Spleen (tissue), 13 donors: ENCODE measurements at regions of chr13 and their contacts with region 1.

Region 1: DNA sequence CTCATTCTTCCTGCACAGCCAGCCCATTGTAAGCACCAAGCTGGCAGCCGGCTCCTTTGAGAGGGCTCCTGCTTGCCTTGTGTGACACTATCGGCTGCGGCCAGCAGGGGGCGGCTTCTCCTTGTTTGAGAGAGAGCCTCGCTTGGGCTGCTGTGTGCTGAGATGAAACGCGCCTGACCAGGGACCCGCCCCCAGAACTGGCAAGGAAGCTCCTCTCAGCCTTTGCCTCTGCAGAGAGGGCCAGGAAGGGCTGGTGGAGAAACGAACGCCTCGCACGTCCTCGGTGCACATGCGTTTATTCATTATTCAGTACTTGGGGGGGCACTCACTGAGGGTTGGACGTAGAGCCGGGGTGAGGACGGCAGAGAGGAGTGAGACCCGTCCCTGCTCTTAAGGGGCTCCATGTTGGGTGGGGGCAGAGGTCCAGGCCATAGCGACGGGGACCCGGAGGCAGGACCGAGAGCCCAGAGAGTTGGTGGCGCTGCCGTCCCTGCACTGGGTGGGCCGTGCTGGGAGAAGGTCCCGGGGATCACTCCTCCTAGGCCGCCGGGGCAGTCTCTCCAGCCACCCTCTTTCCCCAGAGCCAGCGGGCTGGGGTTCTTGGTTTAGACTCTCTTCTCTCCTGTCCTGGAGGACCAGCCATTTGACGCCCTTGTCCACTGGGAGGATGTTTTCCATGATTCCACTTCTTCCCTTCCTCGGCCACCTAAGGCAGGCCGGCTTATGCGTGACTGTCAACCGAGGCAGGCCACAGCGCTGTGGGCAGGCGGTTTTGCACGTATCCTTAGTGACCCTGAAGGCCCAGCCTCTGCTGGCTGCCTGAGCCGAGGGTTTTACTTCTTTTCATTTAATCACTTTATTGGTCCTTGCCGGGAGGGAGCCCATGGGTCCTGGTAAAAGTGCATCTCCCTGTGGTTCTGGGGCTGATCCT is 174.5 kb downstream of the KATNAL1 start:
- DNase-seq: peak; percentile 99
- H3K4me3 ChIP-seq: peak overlapping the region in 1 of 8 donors; percentile 35
- H3K27ac ChIP-seq: no peak overlapping the region
- H3K4me1 ChIP-seq: peaks cover 0 to 11% (median 7%) of the 10 kb centered on the region in 6 donors
- H3K27me3 ChIP-seq: no peaks in the 10 kb centered on the region
- CTCF ChIP-seq: peak; percentile 88 to 98 (median 94)
- POLR2A ChIP-seq: no peak

Region 2: DNA sequence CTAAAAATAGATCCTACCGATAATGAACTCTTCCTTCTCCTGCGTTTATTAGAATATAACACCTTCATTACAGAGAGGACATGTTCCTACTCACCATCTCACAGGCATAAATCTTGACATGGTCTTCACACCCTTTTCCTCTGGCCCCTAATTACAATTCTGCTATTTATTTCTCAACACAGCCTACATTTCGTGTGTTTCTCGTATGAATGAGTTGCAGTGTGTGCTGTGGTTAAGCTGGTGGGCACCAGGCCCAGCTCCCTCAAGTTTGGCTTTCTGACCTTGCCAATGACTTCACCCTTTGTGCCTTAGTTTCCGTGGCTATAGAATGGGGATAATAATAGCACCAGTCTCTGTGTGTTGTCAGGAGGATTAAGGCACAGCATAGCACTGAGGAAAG is 186.8 kb after region 1 on chr13:
- intact Hi-C with region 1: no loop called
- DNase-seq: no peak
- H3K4me3 ChIP-seq: no peak overlapping the region
- H3K27ac ChIP-seq: no peak overlapping the region
- H3K4me1 ChIP-seq: peaks cover 0 to 8% (median 2%) of the 10 kb centered on the region in 6 donors
- H3K27me3 ChIP-seq: no peaks in the 10 kb centered on the region
- CTCF ChIP-seq: no peak
- POLR2A ChIP-seq: no peak

Region 3: GRCh38 chr13:30334663-30335386 is 201.9 kb after region 1 on chr13:
- intact Hi-C with region 1: loop called (anchors 10 kb)
- DNase-seq: no peak
- H3K4me3 ChIP-seq: no peak overlapping the region
- H3K27ac ChIP-seq: no peak overlapping the region
- H3K4me1 ChIP-seq: peaks cover 0 to 32% (median 7%) of the 10 kb centered on the region in 6 donors
- H3K27me3 ChIP-seq: no peaks in the 10 kb centered on the region
- CTCF ChIP-seq: peak in 9 of 11 experiments; percentile 7 to 62 (median 49)
- POLR2A ChIP-seq: no peak

Region 4: GRCh38 chr13:30581582-30581981 is 448.7 kb after region 1 on chr13:
- intact Hi-C with region 1: loop called (anchors 10 kb)
- DNase-seq: no peak
- H3K4me3 ChIP-seq: no peak overlapping the region
- H3K27ac ChIP-seq: no peak overlapping the region
- H3K4me1 ChIP-seq: peaks cover 0 to 22% (median 7%) of the 10 kb centered on the region in 6 donors
- H3K27me3 ChIP-seq: no peaks in the 10 kb centered on the region
- CTCF ChIP-seq: peak in 7 of 11 experiments; percentile 14 to 40 (median 24)
- POLR2A ChIP-seq: no peak

Region 5: GRCh38 chr13:30802953-30803478 is 670.1 kb after region 1 on chr13:
- intact Hi-C with region 1: loop called (anchors 5 kb)
- DNase-seq: peak; percentile 96
- H3K4me3 ChIP-seq: peak overlapping the region in 7 of 8 donors; percentile 8 to 61 (median 29)
- H3K27ac ChIP-seq: peak overlapping the region in 4 of 8 donors; percentile 5 to 62 (median 20)
- H3K4me1 ChIP-seq: peaks cover 12 to 42% (median 28%) of the 10 kb centered on the region in 6 donors
- H3K27me3 ChIP-seq: no peaks in the 10 kb centered on the region
- CTCF ChIP-seq: peak; percentile 81 to 98 (median 95)
- POLR2A ChIP-seq: peak in 1 of 3 donors; percentile 40

Region 6: DNA sequence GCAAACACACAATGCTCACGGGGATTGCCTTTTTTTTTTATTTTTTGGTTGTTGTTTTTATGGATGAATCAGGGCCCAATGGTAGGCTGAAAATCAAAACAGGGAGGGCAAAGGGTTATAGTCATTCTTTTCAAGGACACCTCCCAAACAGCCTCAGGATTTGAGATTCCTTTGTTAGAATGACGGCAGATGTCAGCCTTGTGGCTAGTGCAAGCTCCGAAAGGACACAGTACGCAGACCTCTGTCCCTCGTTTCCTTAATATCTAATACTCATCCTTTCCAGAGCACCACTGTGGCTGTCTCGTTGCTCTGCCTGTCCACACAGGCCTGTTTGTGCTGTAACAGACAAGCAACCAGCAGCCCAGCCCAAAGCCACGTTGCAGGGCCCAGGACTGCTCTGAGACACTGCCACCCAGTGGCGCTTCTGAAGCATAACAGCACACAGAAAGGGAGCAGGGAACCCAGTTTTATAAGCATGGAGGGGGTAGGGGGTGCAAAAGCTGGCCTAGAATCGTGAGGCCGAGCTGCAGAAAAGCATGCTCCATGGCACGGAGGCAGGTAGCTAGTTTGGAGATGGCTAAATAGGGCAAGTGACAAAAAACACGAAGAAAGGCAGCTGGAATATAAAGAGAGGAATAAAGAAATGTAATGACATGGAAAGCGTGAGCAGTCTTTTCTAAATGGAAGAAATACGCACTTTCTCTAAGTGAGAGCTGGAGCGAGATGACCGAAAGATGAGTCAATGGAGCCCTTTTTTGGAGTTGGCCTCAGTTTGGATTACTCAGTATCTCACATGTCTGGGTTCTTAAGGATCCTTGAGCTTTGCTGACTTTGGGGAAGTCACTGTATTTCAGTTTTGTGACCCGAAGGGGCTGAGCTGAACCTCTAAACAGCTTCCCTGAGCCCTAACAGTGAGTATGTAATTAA is 732.5 kb after region 1 on chr13:
- intact Hi-C with region 1: loop called (anchors 10 kb)
- DNase-seq: peak; percentile 90
- H3K4me3 ChIP-seq: no peak overlapping the region
- H3K27ac ChIP-seq: peak overlapping the region in 1 of 8 donors; percentile 42
- H3K4me1 ChIP-seq: peaks cover 5 to 19% (median 10%) of the 10 kb centered on the region in 6 donors
- H3K27me3 ChIP-seq: no peaks in the 10 kb centered on the region
- CTCF ChIP-seq: peak; percentile 71 to 91 (median 88)
- POLR2A ChIP-seq: no peak

Region 7: GRCh38 chr13:31044377-31045285 is 911.7 kb after region 1 on chr13:
- intact Hi-C with region 1: loop called (anchors 10 kb)
- DNase-seq: peak; percentile 93
- H3K4me3 ChIP-seq: no peak overlapping the region
- H3K27ac ChIP-seq: no peak overlapping the region
- H3K4me1 ChIP-seq: peaks cover 17 to 47% (median 24%) of the 10 kb centered on the region in 6 donors
- H3K27me3 ChIP-seq: peaks cover 0 to 63% (median 24%) of the 10 kb centered on the region in 7 donors
- CTCF ChIP-seq: peak; percentile 72 to 95 (median 93)
- POLR2A ChIP-seq: no peak